CD4-positive, alpha-beta memory T cell (primary cell): ENCODE measurements at regions of chr7 and their contacts with region 1.

Region 1: GRCh38 chr7:144835652-144836544 is at the start of gene TPK1:
- DNase-seq: peak; percentile 89 to 93 (median 91)
- H3K4me3 ChIP-seq: peak within 1 kb of the TSS; percentile 74 to 94
- H3K4me3 Mint-ChIP-seq: peak within 1 kb of the TSS; percentile 95 to 99 (median 98)
- H3K27ac ChIP-seq: peak within 1 kb of the TSS; percentile 76
- H3K27ac Mint-ChIP-seq: peak within 1 kb of the TSS; percentile 95 to 99 (median 99)
- H3K4me1 ChIP-seq: peaks cover 50% of the 10 kb centered on the region
- H3K4me1 Mint-ChIP-seq: peaks cover 20 to 45% (median 34%) of the 10 kb centered on the region in 4 donors
- H3K27me3 ChIP-seq: no peaks in the 10 kb centered on the region
- H3K27me3 Mint-ChIP-seq: no peaks in the 10 kb centered on the region
- total RNA-seq, gene TPK1: 26.7 to 30.7 TPM

Region 2: DNA sequence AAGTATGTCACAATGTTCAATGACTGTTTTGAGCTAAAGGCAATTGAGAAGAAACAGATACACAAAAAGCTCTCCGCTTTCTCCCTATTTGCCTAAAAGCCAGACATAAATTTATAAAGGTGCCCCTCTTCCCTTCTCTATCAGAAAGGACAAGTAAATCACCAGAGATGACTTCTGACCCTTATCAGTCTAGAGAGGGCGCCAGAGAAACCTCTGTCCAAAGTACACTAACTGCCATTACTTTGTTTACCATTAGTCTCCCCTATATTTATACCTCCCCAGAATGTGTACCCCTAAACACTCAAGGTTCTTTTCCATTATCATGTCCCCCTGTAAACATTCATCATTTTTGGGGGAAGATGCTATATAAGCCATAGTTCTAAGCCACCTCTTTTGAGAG is 49.4 kb before region 1 on chr7:
- CTCF ChIA-PET with region 1: interaction called, 56 read pairs
- POLR2A ChIA-PET with region 1: interaction called, 34 read pairs
- intact Hi-C with region 1: loop called (anchors 1 kb)
- DNase-seq: peak in 3 of 5 donors; percentile 5 to 28 (median 6)
- H3K4me3 ChIP-seq: no peak overlapping the region
- H3K4me3 Mint-ChIP-seq: no peak overlapping the region
- H3K27ac ChIP-seq: no peak overlapping the region
- H3K27ac Mint-ChIP-seq: peak overlapping the region in 2 of 7 donors; percentile 49 to 67
- H3K4me1 ChIP-seq: no peaks in the 10 kb centered on the region
- H3K4me1 Mint-ChIP-seq: peaks cover 10 to 22% (median 17%) of the 10 kb centered on the region in 4 donors
- H3K27me3 ChIP-seq: no peaks in the 10 kb centered on the region
- H3K27me3 Mint-ChIP-seq: no peaks in the 10 kb centered on the region

Region 3: GRCh38 chr7:144812379-144813283 is 23.3 kb before region 1 on chr7:
- CTCF ChIA-PET with region 1: interaction called, 83 read pairs
- POLR2A ChIA-PET with region 1: interaction called, 409 read pairs
- intact Hi-C with region 1: loop called (anchors 1 kb)
- DNase-seq: peak; percentile 64 to 78 (median 72)
- H3K4me3 ChIP-seq: peak overlapping the region in 1 of 2 donors; percentile 2
- H3K4me3 Mint-ChIP-seq: peak overlapping the region; percentile 67 to 84 (median 78)
- H3K27ac ChIP-seq: peak overlapping the region; percentile 46
- H3K27ac Mint-ChIP-seq: peak overlapping the region; percentile 86 to 94 (median 93)
- H3K4me1 ChIP-seq: peaks cover 72% of the 10 kb centered on the region
- H3K4me1 Mint-ChIP-seq: peaks cover 45 to 78% (median 58%) of the 10 kb centered on the region in 4 donors
- H3K27me3 ChIP-seq: no peaks in the 10 kb centered on the region
- H3K27me3 Mint-ChIP-seq: no peaks in the 10 kb centered on the region

Region 4: GRCh38 chr7:144824360-144824759 is 11.5 kb before region 1 on chr7:
- CTCF ChIA-PET with region 1: interaction called, 83 read pairs
- POLR2A ChIA-PET with region 1: interaction called, 409 read pairs
- intact Hi-C with region 1: loop called (anchors 1 kb)
- DNase-seq: no peak
- H3K4me3 ChIP-seq: no peak overlapping the region
- H3K4me3 Mint-ChIP-seq: no peak overlapping the region
- H3K27ac ChIP-seq: no peak overlapping the region
- H3K27ac Mint-ChIP-seq: peak overlapping the region in 1 of 7 donors; percentile 4
- H3K4me1 ChIP-seq: peaks cover 45% of the 10 kb centered on the region
- H3K4me1 Mint-ChIP-seq: peaks cover 47 to 71% (median 57%) of the 10 kb centered on the region in 4 donors
- H3K27me3 ChIP-seq: no peaks in the 10 kb centered on the region
- H3K27me3 Mint-ChIP-seq: no peaks in the 10 kb centered on the region

Region 5: GRCh38 chr7:145009876-145010275 is 174.0 kb after region 1 on chr7:
- CTCF ChIA-PET with region 1: no interaction called
- POLR2A ChIA-PET with region 1: no interaction called
- intact Hi-C with region 1: no loop called
- DNase-seq: no peak
- H3K4me3 ChIP-seq: no peak overlapping the region
- H3K4me3 Mint-ChIP-seq: no peak overlapping the region
- H3K27ac ChIP-seq: no peak overlapping the region
- H3K27ac Mint-ChIP-seq: no peak overlapping the region
- H3K4me1 ChIP-seq: no peaks in the 10 kb centered on the region
- H3K4me1 Mint-ChIP-seq: no peaks in the 10 kb centered on the region
- H3K27me3 ChIP-seq: peaks cover 4% of the 10 kb centered on the region
- H3K27me3 Mint-ChIP-seq: peaks cover 2 to 7% of the 10 kb centered on the region in 2 donors